Posterior vena cava (tissue), 2 donors: ENCODE measurements at regions of chr19 and their contacts with region 1.

Region 1: GRCh38 chr19:44943801-44944249 is 1.8 kb downstream of the APOC4 start:
- DNase-seq: peak; percentile 89

Region 2: GRCh38 chr19:44808463-44809371 is 135.1 kb before region 1 on chr19 and contains the start of gene BCAM:
- intact Hi-C with region 1: no loop called
- DNase-seq: peak; percentile 87
- total RNA-seq, gene BCAM: 49.6 to 53.8 TPM

Region 3: GRCh38 chr19:44903602-44904425 is 40.0 kb before region 1 on chr19:
- intact Hi-C with region 1: loop called in 1 of 2 experiments (anchors 5 kb)
- DNase-seq: peak; percentile 93

Region 4: GRCh38 chr19:44974857-44975256 is 31.0 kb after region 1 on chr19:
- intact Hi-C with region 1: no loop called
- DNase-seq: no peak

Region 5: DNA sequence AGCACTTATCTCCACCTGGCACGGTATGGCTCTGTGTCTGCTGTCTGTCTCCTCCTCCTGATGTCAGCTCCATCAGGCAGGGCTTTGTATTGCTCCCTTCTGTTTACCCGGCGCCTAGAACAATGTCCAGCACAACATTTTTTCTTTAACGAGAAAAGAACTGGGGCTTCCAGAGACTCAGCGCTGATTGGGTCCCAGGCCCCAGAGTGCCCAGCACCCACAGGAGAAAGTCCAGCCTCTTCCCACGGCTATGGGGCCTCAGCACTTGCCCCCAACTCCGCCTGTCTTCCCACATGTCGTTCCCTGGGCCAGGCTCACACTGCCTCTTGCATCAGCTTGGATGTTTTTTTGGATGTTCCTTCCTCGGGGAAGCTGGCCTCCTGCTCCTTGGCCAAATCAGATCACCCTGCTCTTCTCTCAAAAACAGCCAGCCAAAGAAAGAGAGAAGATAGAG is 951.7 kb after region 1 on chr19:
- intact Hi-C with region 1: loop called in 1 of 2 experiments (anchors 5 kb)
- DNase-seq: no peak